A549 (cell line): ENCODE measurements at regions of chr9 and their contacts with region 1.

Region 1: GRCh38 chr9:98263482-98264357 is 8.3 kb upstream of the TBC1D2 start:
- DNase-seq: peak; percentile 74 to 81
- ATAC-seq: peak; percentile 100
- H3K4me3 ChIP-seq: no peak overlapping the region
- H3K27ac ChIP-seq: no peak overlapping the region
- H3K4me1 ChIP-seq: no peaks in the 10 kb centered on the region
- CTCF ChIP-seq: peak; percentile 96
- EP300 ChIP-seq: no peak
- POLR2A ChIP-seq: no peak
- RAD21 ChIP-seq: peak; percentile 96 to 99

Region 2: GRCh38 chr9:97710356-97711222 is 553.1 kb before region 1 on chr9:
- CTCF ChIA-PET with region 1: no interaction called
- POLR2A ChIA-PET with region 1: no interaction called
- DNase-seq: peak; percentile 75 to 86
- ATAC-seq: peak; percentile 94 to 95
- H3K4me3 ChIP-seq: no peak overlapping the region
- H3K27ac ChIP-seq: peak overlapping the region; percentile 18 to 54; a peak in 3 of 6 replicates
- H3K4me1 ChIP-seq: peaks cover 20% of the 10 kb centered on the region
- CTCF ChIP-seq: peak; percentile 82
- EP300 ChIP-seq: no peak
- POLR2A ChIP-seq: no peak
- RAD21 ChIP-seq: peak; percentile 93 to 94

Region 3: GRCh38 chr9:98074115-98074990 is 189.4 kb before region 1 on chr9:
- CTCF ChIA-PET with region 1: interaction called, 33 read pairs
- POLR2A ChIA-PET with region 1: no interaction called
- DNase-seq: peak; percentile 55 to 65
- ATAC-seq: peak; percentile 72 to 81
- H3K4me3 ChIP-seq: no peak overlapping the region
- H3K27ac ChIP-seq: peak overlapping the region; percentile 54 to 70; a peak in 5 of 6 replicates
- H3K4me1 ChIP-seq: peaks cover 28% of the 10 kb centered on the region
- CTCF ChIP-seq: peak; percentile 91
- EP300 ChIP-seq: no peak
- POLR2A ChIP-seq: no peak
- RAD21 ChIP-seq: peak; percentile 82 to 86

Region 4: GRCh38 chr9:98118640-98119601 is 144.8 kb before region 1 on chr9 and contains the start of gene TRIM14:
- CTCF ChIA-PET with region 1: interaction called, 15 read pairs
- POLR2A ChIA-PET with region 1: no interaction called
- DNase-seq: peak; percentile 47 to 83
- ATAC-seq: peak; percentile 81 to 92
- H3K4me3 ChIP-seq: peak within 1 kb of the TSS; percentile 70
- H3K27ac ChIP-seq: peak within 1 kb of the TSS; percentile 77 to 89
- H3K4me1 ChIP-seq: peaks cover 19% of the 10 kb centered on the region
- CTCF ChIP-seq: peak; percentile 38; the same call in 2 of the 3 replicates
- EP300 ChIP-seq: no peak
- POLR2A ChIP-seq: peak; percentile 34
- RAD21 ChIP-seq: peak; percentile 30 to 57; a peak in 4 of 5 replicates
- polyA plus RNA-seq, gene TRIM14: 9.2 and 9.7 TPM in 2 replicates

Region 5: DNA sequence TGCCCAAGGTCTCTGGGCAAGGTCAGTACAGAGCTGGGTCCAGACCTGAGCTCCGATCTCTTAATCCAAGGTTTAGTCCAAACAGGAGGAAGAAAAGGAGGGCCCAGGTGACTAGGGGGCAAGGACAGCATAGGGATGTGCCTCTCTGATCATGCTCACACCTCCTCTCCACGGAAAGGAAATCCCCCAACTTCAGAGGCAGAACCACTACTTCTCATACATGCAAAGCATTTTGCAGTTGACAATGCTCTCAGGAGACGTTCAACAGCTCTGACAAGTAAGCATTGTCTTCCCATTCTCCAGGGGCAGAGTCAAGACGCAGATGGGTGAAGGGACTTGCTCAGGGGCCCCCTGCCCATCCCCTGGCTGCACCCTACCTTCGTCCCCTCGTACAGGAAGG is 62.6 kb before region 1 on chr9:
- CTCF ChIA-PET with region 1: interaction called, 127 read pairs
- POLR2A ChIA-PET with region 1: no interaction called
- DNase-seq: no peak
- ATAC-seq: no peak
- H3K4me3 ChIP-seq: no peak overlapping the region
- H3K27ac ChIP-seq: no peak overlapping the region
- H3K4me1 ChIP-seq: peaks cover 3% of the 10 kb centered on the region; the same call in 1 of the 3 replicates
- CTCF ChIP-seq: no peak
- EP300 ChIP-seq: no peak
- POLR2A ChIP-seq: no peak
- RAD21 ChIP-seq: no peak

Region 6: DNA sequence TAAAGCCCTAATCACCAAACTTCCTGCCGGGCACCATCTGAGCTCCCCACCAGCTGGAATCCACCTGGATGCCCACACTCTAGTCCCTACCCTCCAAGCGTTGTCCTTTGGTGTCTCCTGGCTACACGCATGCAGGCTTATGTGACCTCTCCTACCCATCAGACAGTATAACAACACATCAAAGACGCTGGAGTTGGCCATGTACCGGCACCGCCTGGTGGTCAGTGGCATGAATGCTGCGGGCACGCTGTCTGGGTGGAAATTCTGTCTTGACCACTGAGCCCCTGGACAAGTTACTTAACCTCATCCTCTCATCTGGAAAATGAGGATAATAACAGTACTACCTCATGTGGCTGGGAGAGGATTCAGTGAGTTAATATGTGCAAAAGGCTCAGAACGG is 47.9 kb before region 1 on chr9:
- CTCF ChIA-PET with region 1: interaction called, 127 read pairs
- POLR2A ChIA-PET with region 1: no interaction called
- DNase-seq: peak; percentile 47 to 70
- ATAC-seq: peak; percentile 87 to 93
- H3K4me3 ChIP-seq: no peak overlapping the region
- H3K27ac ChIP-seq: 0 out of 6 replicates have a peak overlapping the region, but pooled peaks of 1 of the 2 experiments have one; percentile 4
- H3K4me1 ChIP-seq: peaks cover 20% of the 10 kb centered on the region
- CTCF ChIP-seq: peak; percentile 42; the same call in 2 of the 3 replicates
- EP300 ChIP-seq: no peak
- POLR2A ChIP-seq: no peak
- RAD21 ChIP-seq: peak; percentile 43 to 58; a peak in 4 of 5 replicates

Region 7: GRCh38 chr9:98280574-98280973 is 16.9 kb after region 1 on chr9:
- CTCF ChIA-PET with region 1: interaction called, 23 read pairs
- POLR2A ChIA-PET with region 1: no interaction called
- DNase-seq: no peak
- ATAC-seq: no peak
- H3K4me3 ChIP-seq: no peak overlapping the region
- H3K27ac ChIP-seq: no peak overlapping the region
- H3K4me1 ChIP-seq: no peaks in the 10 kb centered on the region
- CTCF ChIP-seq: no peak
- EP300 ChIP-seq: no peak
- POLR2A ChIP-seq: no peak
- RAD21 ChIP-seq: no peak

Region 8: DNA sequence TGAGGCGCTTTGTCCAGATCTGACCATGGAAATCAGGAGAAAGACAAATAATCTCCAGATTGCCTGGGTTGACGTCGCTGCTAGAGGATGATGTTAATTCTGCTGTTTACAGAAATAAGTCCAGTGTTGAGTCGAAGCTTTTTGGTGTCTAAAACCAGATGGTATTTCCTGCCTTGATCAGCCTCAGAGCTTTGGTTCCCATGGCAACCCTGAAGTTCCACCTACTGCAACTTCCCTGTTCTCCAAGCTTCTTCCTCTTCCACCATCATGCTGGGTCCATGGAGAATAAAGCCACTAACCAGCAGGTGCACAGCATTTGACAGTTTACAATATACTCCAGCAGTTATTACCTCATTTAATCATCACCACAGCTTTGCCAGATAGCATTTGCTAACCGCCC is 463.0 kb after region 1 on chr9:
- CTCF ChIA-PET with region 1: no interaction called
- POLR2A ChIA-PET with region 1: no interaction called
- DNase-seq: no peak
- ATAC-seq: no peak
- H3K4me3 ChIP-seq: no peak overlapping the region
- H3K27ac ChIP-seq: no peak overlapping the region
- H3K4me1 ChIP-seq: no peaks in the 10 kb centered on the region
- CTCF ChIP-seq: no peak
- EP300 ChIP-seq: no peak
- POLR2A ChIP-seq: no peak
- RAD21 ChIP-seq: no peak

Region 9: GRCh38 chr9:98916660-98917059 is 652.9 kb after region 1 on chr9:
- CTCF ChIA-PET with region 1: no interaction called
- POLR2A ChIA-PET with region 1: no interaction called
- DNase-seq: no peak
- ATAC-seq: no peak
- H3K4me3 ChIP-seq: no peak overlapping the region
- H3K27ac ChIP-seq: no peak overlapping the region
- H3K4me1 ChIP-seq: no peaks in the 10 kb centered on the region
- CTCF ChIP-seq: no peak
- EP300 ChIP-seq: no peak
- POLR2A ChIP-seq: no peak
- RAD21 ChIP-seq: no peak